Caco-2 (cell line): ENCODE measurements at regions of chr5 and their contacts with region 1.

Region 1: GRCh38 chr5:96043446-96043845 is 81.8 kb upstream of the ELL2 start:
- DNase-seq: no peak
- H3K4me3 ChIP-seq: no peak overlapping the region
- H3K4me3 Mint-ChIP-seq: no peak overlapping the region
- H3K27ac Mint-ChIP-seq: no peak overlapping the region
- H3K4me1 ChIP-seq: peaks cover under 1% of the 10 kb centered on the region; the same call in 1 of the 2 replicates
- H3K4me1 Mint-ChIP-seq: peaks cover 6% of the 10 kb centered on the region
- H3K27me3 ChIP-seq: no peaks in the 10 kb centered on the region
- H3K27me3 Mint-ChIP-seq: no peaks in the 10 kb centered on the region
- CTCF ChIP-seq: no peak

Region 2: DNA sequence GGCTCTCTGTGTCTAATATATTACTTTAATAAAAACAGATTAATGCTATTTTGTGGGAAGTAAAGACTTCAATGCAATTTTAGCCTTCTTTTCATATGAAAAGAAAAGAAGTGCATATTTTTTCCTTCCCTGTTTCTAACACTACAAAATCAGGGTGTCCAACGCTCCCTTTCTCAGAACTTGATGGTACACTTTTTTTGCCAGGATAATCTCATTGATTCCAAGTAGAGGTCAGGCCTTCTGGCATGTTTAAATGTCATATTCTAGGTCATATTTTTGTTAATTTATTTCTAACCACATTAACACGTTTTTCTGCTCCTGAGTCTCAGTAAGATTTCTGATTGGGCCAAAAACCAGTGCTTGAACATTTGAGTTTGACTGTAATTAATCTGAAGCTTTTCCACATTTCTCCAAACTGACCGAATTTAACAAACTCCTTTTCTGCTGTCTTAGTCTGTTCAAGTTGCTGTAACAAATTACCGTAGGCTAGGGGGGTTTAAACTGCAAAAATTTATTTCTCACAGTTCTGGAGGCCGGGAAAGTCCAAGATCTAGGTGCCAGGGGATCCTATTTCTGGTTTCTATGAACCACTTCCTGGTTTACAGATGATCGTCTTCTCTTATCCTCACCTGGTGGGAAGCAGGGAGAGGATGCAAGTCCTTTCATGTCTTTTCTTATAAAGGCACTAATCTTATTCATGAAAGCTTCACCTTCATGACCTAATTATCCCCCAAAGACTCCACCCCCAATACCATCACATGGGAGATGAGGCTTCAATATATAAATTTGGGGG is 18.6 kb before region 1 on chr5:
- CTCF ChIA-PET with region 1: no interaction called
- POLR2A ChIA-PET with region 1: no interaction called
- intact Hi-C with region 1: loop called (anchors 1 kb)
- DNase-seq: no peak
- H3K4me3 ChIP-seq: no peak overlapping the region
- H3K4me3 Mint-ChIP-seq: no peak overlapping the region
- H3K27ac Mint-ChIP-seq: peak overlapping the region; percentile 63
- H3K4me1 ChIP-seq: peaks cover 32% of the 10 kb centered on the region
- H3K4me1 Mint-ChIP-seq: peaks cover 14% of the 10 kb centered on the region
- H3K27me3 ChIP-seq: no peaks in the 10 kb centered on the region
- H3K27me3 Mint-ChIP-seq: no peaks in the 10 kb centered on the region
- CTCF ChIP-seq: no peak